Activated CD4-positive, alpha-beta memory T cell treated with anti-CD3 and anti-CD28 coated beads for 36 hours (primary cell): ENCODE measurements at regions of chr5 and their contacts with region 1.

Region 1: GRCh38 chr5:172714491-172715421 is 56.2 kb downstream of the DUSP1 start:
- DNase-seq: peak; percentile 72
- H3K4me3 Mint-ChIP-seq: no peak overlapping the region
- H3K27ac Mint-ChIP-seq: no peak overlapping the region
- H3K4me1 Mint-ChIP-seq: no peaks in the 10 kb centered on the region
- H3K27me3 Mint-ChIP-seq: peaks cover 7% of the 10 kb centered on the region

Region 2: GRCh38 chr5:172490514-172491461 is 224.0 kb before region 1 on chr5:
- CTCF ChIA-PET with region 1: no interaction called
- POLR2A ChIA-PET with region 1: no interaction called
- intact Hi-C with region 1: no loop called
- DNase-seq: no peak
- H3K4me3 Mint-ChIP-seq: no peak overlapping the region
- H3K27ac Mint-ChIP-seq: no peak overlapping the region
- H3K4me1 Mint-ChIP-seq: no peaks in the 10 kb centered on the region
- H3K27me3 Mint-ChIP-seq: peaks cover 11% of the 10 kb centered on the region

Region 3: DNA sequence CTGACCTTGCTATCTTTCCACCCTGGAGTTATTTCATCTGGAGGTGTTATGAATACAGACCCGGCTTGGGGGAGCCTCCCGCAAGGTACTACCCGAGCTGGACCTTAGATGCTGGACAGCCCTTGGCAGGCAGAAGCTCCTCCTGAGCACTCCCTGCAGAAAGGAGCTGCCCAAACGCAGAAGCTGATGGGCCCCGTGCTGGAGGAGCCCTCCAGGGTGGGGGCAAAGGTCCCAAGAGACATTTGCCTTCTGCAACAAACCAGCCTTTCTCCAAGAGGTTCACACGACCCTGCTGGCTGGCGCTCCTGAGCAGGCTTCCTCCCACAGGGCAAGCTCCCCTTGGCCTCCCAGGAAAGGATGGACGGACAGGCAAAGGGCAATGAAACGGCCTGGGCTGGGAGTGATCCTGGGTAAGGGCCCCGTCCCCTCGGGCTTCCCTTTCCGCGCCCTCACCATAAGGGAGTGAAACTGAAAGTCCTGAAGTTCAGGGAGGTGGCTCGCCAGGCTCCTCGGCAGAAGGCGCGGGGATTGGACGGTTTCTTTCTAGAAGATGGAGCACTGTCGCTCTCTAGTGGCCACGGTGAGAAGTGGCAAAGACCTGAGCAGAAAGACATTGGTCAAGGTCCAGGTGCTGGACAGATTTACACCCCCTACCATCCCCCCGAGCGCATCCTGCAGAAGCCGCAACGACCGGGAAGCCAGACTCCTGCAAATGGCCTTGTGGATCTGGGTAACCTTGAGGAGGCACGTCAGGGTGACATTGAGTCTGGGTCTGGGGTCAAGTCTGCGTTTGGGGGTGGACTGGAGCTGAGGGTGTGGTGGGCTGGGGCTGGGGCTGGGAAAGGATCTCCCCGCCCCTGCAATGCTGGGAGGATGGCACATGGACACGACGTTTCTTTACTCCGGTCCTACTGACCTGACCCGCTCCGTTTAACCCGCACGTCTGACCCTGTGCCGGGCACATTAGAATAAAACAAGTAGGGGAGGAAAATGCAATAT is 17.3 kb before region 1 on chr5:
- CTCF ChIA-PET with region 1: interaction called, 37 read pairs
- POLR2A ChIA-PET with region 1: no interaction called
- intact Hi-C with region 1: no loop called
- DNase-seq: peak; percentile 88
- H3K4me3 Mint-ChIP-seq: peak overlapping the region; percentile 76
- H3K27ac Mint-ChIP-seq: peak overlapping the region; percentile 54
- H3K4me1 Mint-ChIP-seq: peaks cover 13% of the 10 kb centered on the region
- H3K27me3 Mint-ChIP-seq: peaks cover 12% of the 10 kb centered on the region

Region 4: DNA sequence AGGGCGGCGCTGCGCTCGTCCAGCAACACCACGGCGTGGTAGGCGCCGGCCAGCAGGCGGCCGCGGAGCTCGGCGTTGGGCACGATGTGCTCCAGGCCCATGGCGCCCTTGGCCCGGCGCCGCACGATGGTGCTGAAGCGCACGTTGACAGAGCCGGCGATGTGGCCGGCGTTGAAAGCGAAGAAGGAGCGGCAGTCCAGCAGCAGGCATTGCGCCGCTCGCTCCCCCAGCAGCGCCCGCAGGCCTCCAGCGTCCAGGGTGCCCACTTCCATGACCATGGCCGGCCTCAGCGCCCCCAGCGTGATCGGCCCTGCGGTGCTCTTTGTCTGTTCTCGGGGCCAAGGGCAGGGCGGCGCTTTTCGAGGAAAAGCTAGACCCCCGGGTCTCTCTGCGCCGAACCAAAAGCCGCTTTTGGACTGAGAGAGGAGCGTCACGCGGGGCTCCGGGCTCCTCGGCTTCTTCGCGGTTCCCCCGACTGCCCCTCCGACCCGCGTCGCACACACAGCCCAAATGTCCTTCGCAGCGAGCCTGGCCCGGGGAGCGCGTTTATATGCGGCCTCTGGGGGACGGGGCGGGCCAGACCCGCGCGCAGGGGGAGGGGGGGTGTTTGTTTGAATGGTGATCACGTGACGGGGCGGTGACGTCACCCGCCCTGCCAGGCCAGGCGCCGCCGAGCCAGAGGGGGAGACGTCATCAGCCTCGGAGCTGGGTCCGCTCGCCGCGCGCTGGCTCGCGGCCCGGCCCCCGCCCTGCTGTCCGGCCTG is 56.1 kb after region 1 on chr5 and contains the start of gene DUSP1:
- CTCF ChIA-PET with region 1: interaction called, 47 read pairs
- POLR2A ChIA-PET with region 1: interaction called, 3 read pairs
- intact Hi-C with region 1: loop called (anchors 1 kb)
- DNase-seq: peak; percentile 97
- H3K4me3 Mint-ChIP-seq: peak within 1 kb of the TSS; percentile 89
- H3K27ac Mint-ChIP-seq: peak within 1 kb of the TSS; percentile 92
- H3K4me1 Mint-ChIP-seq: peaks cover 65% of the 10 kb centered on the region
- H3K27me3 Mint-ChIP-seq: no peaks in the 10 kb centered on the region
- total RNA-seq, gene DUSP1: 10.6 to 10.7 TPM

Region 5: GRCh38 chr5:172833686-172834414 is 119.1 kb after region 1 on chr5 and contains the start of gene ERGIC1:
- CTCF ChIA-PET with region 1: interaction called, 9 read pairs
- POLR2A ChIA-PET with region 1: no interaction called
- intact Hi-C with region 1: loop called (anchors 5 kb)
- DNase-seq: peak; percentile 82
- H3K4me3 Mint-ChIP-seq: peak within 1 kb of the TSS; percentile 83
- H3K27ac Mint-ChIP-seq: peak within 1 kb of the TSS; percentile 81
- H3K4me1 Mint-ChIP-seq: peaks cover 41% of the 10 kb centered on the region
- H3K27me3 Mint-ChIP-seq: no peaks in the 10 kb centered on the region
- total RNA-seq, gene ERGIC1: 41.9 to 42.7 TPM

Region 6: GRCh38 chr5:172926796-172927195 is 212.0 kb after region 1 on chr5:
- CTCF ChIA-PET with region 1: interaction called, 393 read pairs
- POLR2A ChIA-PET with region 1: interaction called, 3 read pairs
- intact Hi-C with region 1: no loop called
- DNase-seq: no peak
- H3K4me3 Mint-ChIP-seq: no peak overlapping the region
- H3K27ac Mint-ChIP-seq: no peak overlapping the region
- H3K4me1 Mint-ChIP-seq: no peaks in the 10 kb centered on the region
- H3K27me3 Mint-ChIP-seq: no peaks in the 10 kb centered on the region

Region 7: DNA sequence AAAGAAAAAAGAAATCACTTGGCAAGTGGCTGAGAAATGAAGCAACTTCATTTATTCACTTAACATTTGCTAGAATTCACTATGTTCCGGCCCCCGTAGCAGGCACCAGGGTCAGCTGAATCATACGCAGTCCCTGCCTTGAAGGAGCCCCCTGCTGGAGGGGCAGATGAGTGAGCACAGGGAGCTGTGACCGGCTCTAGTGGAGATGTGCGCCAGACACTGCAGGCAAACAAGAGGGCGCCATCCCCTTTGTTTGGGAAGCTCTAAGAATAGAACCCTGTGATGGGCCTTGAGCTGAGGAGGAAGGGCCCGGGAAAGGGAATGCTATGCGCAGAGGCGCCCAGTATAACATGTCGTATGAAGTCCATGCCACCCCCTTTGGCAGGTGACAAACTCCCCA is 224.3 kb after region 1 on chr5:
- CTCF ChIA-PET with region 1: interaction called, 393 read pairs
- POLR2A ChIA-PET with region 1: no interaction called
- intact Hi-C with region 1: no loop called
- DNase-seq: peak; percentile 20
- H3K4me3 Mint-ChIP-seq: no peak overlapping the region
- H3K27ac Mint-ChIP-seq: no peak overlapping the region
- H3K4me1 Mint-ChIP-seq: no peaks in the 10 kb centered on the region
- H3K27me3 Mint-ChIP-seq: no peaks in the 10 kb centered on the region

Region 8: DNA sequence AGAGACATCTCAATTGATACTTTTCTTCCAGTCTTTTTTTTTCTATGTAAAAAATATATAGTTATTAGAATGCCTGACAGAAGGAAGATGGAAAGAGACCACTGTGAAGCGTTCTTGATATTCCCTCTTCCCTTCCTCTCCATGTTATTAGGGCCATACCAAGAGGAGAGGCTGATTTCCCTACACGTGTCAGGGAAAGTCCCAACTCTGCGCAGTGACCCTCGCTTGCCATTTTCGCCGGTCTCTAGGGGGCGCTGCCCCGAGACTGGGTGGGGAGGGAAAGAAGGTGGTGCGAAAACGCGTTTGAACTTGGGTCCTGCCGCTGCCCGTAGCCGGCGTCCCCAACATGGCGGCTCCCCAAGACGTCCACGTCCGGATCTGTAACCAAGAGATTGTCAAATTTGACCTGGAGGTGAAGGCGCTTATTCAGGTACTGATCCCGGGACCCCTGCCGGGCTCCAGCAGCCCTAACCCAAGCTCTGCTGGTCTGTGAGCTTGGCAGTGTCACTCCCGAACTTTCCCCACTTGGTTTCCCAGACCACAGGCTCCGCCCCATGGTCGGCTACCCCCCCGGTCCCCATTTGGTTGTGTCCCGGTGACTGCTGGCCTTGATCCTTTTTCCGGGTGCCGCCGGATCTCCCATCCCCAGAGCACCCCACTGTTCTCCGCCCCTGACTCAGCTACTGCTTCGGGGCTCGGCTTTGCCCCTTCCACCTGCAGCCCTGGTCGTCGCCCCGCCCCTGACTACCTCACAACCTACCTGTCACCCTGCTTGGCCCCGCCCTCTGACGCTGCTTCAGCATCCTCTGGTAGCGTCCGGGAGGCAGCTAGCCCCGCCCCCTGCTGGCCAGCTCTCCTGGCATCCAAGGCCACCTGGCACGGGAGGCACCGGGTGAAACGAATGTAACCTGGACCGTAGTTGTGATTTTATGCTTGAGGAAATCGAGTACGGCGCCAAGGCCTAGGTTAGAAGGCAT is 429.7 kb after region 1 on chr5 and contains the start of gene BNIP1:
- CTCF ChIA-PET with region 1: interaction called, 3 read pairs
- POLR2A ChIA-PET with region 1: no interaction called
- intact Hi-C with region 1: loop called (anchors 2 kb)
- DNase-seq: peak; percentile 98
- H3K4me3 Mint-ChIP-seq: peak within 1 kb of the TSS; percentile 99
- H3K27ac Mint-ChIP-seq: peak within 1 kb of the TSS; percentile 97
- H3K4me1 Mint-ChIP-seq: peaks cover 9% of the 10 kb centered on the region
- H3K27me3 Mint-ChIP-seq: no peaks in the 10 kb centered on the region
- total RNA-seq, gene BNIP1: 19.3 to 20.9 TPM